ENCODE measurements at regions of chr15 and their contacts with region 1.

Region 1: GRCh38 chr15:62071711-62072308 is 5.0 kb downstream of the C2CD4A start:
- DNase-seq: no peak
- H3K4me3 ChIP-seq: no peak overlapping the region
- H3K27me3 ChIP-seq: peaks cover 8% of the 10 kb centered on the region
- CTCF ChIP-seq: peak; percentile 57

Region 2: GRCh38 chr15:61736790-61737189 is 335.0 kb before region 1 on chr15:
- CTCF ChIA-PET with region 1: no interaction called
- POLR2A ChIA-PET with region 1: no interaction called
- DNase-seq: no peak
- H3K4me3 ChIP-seq: no peak overlapping the region
- H3K27me3 ChIP-seq: no peaks in the 10 kb centered on the region
- CTCF ChIP-seq: no peak

Region 3: DNA sequence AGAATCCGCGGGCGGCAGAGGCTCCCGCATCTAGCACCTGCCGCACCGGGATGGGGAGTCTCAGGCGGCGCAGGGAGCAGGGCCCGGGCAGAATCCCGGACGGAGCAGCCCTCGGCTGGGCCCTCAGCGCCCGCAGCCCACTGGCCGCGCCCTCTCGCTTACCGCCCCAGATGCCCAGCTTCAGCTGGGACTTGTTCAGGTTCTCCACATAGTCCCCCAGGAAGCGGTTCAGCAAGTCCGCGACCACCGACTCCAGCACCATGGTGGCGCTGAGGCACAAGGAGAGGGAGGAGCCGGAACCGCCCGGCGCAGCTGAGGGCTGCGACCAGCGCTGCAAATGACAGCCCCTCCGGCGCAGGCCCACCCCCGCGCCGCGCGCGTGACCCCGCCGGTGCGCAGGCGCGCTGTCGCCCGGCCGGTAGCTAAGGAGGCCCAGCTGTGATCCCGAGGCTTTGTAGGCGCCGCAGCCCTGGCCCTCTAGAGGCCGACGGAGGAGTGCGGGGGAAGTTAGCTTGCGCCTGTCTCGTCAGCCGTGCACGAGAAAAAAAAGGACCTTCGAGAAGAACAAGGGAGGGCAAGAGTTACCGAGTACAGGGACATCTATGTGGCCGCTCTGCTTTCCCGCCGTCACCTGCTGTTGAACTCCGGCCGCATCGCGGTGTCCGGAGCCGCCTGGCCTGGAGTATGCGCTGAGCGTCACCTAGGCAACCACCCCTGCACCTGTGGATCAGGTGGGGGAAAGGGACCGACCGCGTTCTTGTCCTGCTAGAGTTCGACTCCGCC is 11.5 kb before region 1 on chr15 and contains the start of gene VPS13C:
- CTCF ChIA-PET with region 1: interaction called, 25 read pairs
- POLR2A ChIA-PET with region 1: no interaction called
- DNase-seq: peak; percentile 68
- H3K4me3 ChIP-seq: peak within 1 kb of the TSS; percentile 88
- H3K27me3 ChIP-seq: peaks cover 2% of the 10 kb centered on the region; the same call in 1 of the 2 replicates
- CTCF ChIP-seq: peak; percentile 86
- polyA plus RNA-seq, gene VPS13C: 6.0 and 13.5 TPM in 2 replicates

Region 4: DNA sequence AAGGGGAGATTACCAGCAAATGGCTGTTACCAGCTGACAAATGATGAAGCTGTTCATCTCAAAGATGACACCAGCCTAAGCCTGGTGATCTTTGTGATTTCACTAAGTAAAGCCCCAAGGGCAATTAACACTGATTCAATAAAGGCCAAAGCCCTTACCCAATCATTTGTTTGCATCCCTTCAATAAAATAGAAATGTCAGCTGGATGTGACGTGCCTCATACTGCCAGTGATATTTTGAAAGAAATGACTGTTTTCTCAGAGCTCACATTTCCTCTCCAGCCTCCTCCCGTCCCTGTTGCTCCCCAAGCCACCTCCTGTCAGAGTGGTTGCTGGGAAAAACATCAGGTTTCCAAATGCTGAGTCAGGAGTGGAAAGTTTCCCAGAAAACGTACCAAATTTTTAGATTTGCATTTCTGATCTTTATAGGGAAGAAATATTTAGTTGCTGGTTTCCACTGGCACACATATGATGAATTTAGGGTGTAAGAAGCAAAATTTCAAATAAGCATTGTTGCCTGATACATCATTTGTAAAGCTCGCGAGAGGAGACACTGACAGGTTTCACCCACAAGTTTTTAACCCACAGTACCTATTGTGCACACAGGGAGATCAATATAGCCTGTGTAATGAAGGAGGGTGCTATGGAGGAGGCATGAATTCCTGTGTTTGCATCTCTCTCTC is 16.0 kb after region 1 on chr15:
- CTCF ChIA-PET with region 1: interaction called, 11 read pairs
- POLR2A ChIA-PET with region 1: no interaction called
- DNase-seq: no peak
- H3K4me3 ChIP-seq: no peak overlapping the region
- H3K27me3 ChIP-seq: no peaks in the 10 kb centered on the region; the same call in 1 of the 2 replicates
- CTCF ChIP-seq: no peak

Measured in BJ (cell line).